ENCODE measurements at regions of chr3 and their contacts with region 1.

Region 1: GRCh38 chr3:160707187-160707794 is 30.3 kb downstream of the ARL14 start:
- DNase-seq: peak; percentile 73
- ATAC-seq: peak; percentile 93
- H3K4me3 ChIP-seq: no peak overlapping the region
- H3K27ac ChIP-seq: no peak overlapping the region
- H3K4me1 ChIP-seq: no peaks in the 10 kb centered on the region
- H3K27me3 ChIP-seq: no peaks in the 10 kb centered on the region
- CTCF ChIP-seq: peak; percentile 70

Region 2: DNA sequence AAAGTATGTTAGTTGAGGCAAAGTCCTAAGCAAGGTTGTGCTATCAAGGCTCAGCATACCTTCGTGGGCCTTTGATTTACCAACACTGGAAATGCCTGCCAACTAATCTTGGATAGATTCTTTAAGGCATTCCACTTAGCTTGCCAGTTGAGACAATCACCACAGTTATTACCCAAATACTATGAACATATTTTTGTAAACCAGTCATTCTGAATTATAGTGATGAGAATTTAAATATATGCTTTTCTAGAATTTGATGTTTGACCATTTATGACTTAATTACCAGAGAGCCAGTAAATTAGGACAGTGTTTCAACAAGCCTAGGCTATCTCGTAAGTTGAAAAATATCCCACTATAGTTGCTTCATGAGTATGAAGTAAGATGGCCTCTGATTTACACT is 273.2 kb before region 1 on chr3:
- CTCF ChIA-PET with region 1: no interaction called
- POLR2A ChIA-PET with region 1: no interaction called
- intact Hi-C with region 1: no loop called
- DNase-seq: no peak
- ATAC-seq: no peak
- H3K4me3 ChIP-seq: no peak overlapping the region
- H3K27ac ChIP-seq: no peak overlapping the region
- H3K4me1 ChIP-seq: no peaks in the 10 kb centered on the region
- H3K27me3 ChIP-seq: no peaks in the 10 kb centered on the region
- CTCF ChIP-seq: no peak

Region 3: GRCh38 chr3:160577556-160578195 is 129.6 kb before region 1 on chr3:
- CTCF ChIA-PET with region 1: no interaction called
- POLR2A ChIA-PET with region 1: no interaction called
- intact Hi-C with region 1: loop called (anchors 1 kb)
- DNase-seq: peak; percentile 85
- ATAC-seq: peak; percentile 98
- H3K4me3 ChIP-seq: no peak overlapping the region
- H3K27ac ChIP-seq: no peak overlapping the region
- H3K4me1 ChIP-seq: peaks cover 11% of the 10 kb centered on the region
- H3K27me3 ChIP-seq: no peaks in the 10 kb centered on the region
- CTCF ChIP-seq: peak; percentile 90

Region 4: GRCh38 chr3:160754855-160755747 is 47.8 kb after region 1 on chr3:
- CTCF ChIA-PET with region 1: no interaction called
- POLR2A ChIA-PET with region 1: no interaction called
- intact Hi-C with region 1: loop called (anchors 5 kb)
- DNase-seq: peak; percentile 96
- ATAC-seq: peak; percentile 89
- H3K4me3 ChIP-seq: peak overlapping the region; percentile 88
- H3K27ac ChIP-seq: peak overlapping the region; percentile 50
- H3K4me1 ChIP-seq: peaks cover 5% of the 10 kb centered on the region; the same call in 1 of the 2 replicates
- H3K27me3 ChIP-seq: no peaks in the 10 kb centered on the region
- CTCF ChIP-seq: no peak

Region 5: GRCh38 chr3:160941885-160942494 is 234.7 kb after region 1 on chr3:
- CTCF ChIA-PET with region 1: no interaction called
- POLR2A ChIA-PET with region 1: no interaction called
- intact Hi-C with region 1: loop called (anchors 1 kb)
- DNase-seq: peak; percentile 90
- ATAC-seq: peak; percentile 88
- H3K4me3 ChIP-seq: no peak overlapping the region
- H3K27ac ChIP-seq: no peak overlapping the region
- H3K4me1 ChIP-seq: no peaks in the 10 kb centered on the region
- H3K27me3 ChIP-seq: no peaks in the 10 kb centered on the region
- CTCF ChIP-seq: peak; percentile 92

Region 6: DNA sequence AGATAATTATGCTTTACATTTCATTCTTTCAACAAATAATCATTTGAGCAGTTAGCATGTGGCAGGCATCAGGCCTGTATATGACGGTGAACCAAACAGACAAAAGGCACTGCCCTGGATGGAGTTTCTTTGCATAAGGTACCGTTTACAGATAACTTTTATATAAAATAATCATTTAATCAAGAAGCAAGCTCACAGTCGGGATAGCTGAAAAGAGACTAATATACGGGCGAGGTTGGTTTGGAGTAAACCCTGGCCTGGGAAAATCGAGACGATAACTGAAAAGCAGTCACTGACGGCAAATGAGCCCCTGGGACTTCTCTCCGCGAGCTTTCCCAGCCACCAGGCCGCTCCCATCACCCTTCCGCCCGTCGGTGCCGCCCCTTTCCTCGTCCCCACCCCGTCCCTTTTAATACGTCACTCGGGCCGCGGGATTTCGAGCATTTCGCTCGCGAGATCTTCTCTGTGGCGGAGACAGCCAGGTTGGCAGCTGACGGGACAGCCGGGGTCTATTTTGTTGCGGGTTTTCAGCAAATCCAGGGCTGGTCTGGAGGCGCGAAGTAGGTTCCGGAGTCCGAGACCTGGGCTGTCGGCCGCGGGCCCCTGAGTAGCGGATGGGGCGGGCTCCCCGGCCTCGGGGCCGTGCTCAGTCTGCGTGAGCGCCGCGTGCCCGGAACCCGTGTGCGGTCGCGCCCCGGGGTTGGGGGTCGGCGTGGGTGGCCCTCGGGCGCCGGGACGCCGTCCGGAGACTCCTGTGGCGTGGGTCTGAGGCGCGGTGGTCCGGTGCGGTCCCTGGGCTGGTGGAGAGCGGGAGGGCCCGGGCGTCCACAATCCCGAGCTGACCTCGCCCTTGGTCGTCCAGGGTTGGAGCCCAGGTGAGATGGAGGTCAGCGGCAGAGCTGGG is 513.8 kb after region 1 on chr3 and contains the start of gene NMD3:
- CTCF ChIA-PET with region 1: no interaction called
- POLR2A ChIA-PET with region 1: no interaction called
- intact Hi-C with region 1: loop called (anchors 10 kb)
- DNase-seq: peak; percentile 98
- ATAC-seq: peak; percentile 80
- H3K4me3 ChIP-seq: peak within 1 kb of the TSS; percentile 96
- H3K27ac ChIP-seq: peak within 1 kb of the TSS; percentile 72
- H3K4me1 ChIP-seq: peaks cover 41% of the 10 kb centered on the region
- H3K27me3 ChIP-seq: no peaks in the 10 kb centered on the region
- CTCF ChIP-seq: no peak
- total RNA-seq, gene NMD3: 65.3 and 72.6 TPM in 2 replicates

Region 7: DNA sequence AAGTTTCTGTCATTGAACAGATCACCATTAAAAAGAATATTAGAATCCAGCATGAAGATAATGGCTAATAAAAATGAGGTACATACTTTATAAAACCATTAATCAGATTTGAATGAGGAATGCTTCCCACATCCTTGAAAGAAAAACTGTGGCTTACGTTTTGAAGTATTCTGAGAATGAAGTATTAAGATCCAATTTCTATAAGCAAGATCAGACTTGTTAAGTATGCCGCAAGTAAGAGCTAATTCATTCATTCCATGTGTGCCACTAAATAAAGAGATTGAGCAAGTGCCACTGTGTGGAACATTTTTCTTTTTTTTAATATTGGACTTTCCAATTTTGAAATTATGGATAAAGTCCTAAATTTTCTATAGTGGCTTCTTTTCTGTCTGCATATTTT is 544.4 kb after region 1 on chr3:
- CTCF ChIA-PET with region 1: no interaction called
- POLR2A ChIA-PET with region 1: no interaction called
- intact Hi-C with region 1: no loop called
- DNase-seq: no peak
- ATAC-seq: no peak
- H3K4me3 ChIP-seq: no peak overlapping the region
- H3K27ac ChIP-seq: no peak overlapping the region
- H3K4me1 ChIP-seq: no peaks in the 10 kb centered on the region
- H3K27me3 ChIP-seq: no peaks in the 10 kb centered on the region
- CTCF ChIP-seq: no peak